ENCODE measurements at regions of chr5 and their contacts with region 1.

Region 1: DNA sequence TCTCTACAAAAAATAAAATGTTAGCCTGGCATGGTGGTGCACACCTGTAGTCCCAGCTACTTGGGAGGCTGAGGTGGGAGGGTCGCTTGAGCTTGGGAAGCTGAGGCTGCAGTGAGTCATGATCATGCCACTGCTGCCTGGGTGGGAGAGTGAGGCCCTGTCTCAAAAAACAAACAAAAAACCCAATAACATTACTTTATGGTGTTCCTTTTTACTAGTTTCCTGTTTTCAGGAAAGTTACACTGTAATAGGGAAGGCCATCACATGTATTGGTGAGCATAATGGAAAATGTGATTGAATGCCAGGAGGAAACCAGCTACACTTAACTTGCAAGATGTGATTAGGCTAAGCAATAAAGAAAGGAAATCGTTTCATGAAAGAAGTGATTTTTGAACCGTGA is 42.7 kb downstream of the SV2C start:
- DNase-seq: no peak
- H3K4me3 ChIP-seq: no peak overlapping the region
- CTCF ChIP-seq: no peak

Region 2: GRCh38 chr5:76050179-76050578 is 75.7 kb before region 1 on chr5:
- in situ Hi-C with region 1: loop called (anchors 5 kb)
- DNase-seq: no peak
- H3K4me3 ChIP-seq: no peak overlapping the region
- CTCF ChIP-seq: no peak

Measured in astrocyte of the cerebellum (primary cell).